B cell (primary cell): ENCODE measurements at regions of chr2 and their contacts with region 1.

Region 1: DNA sequence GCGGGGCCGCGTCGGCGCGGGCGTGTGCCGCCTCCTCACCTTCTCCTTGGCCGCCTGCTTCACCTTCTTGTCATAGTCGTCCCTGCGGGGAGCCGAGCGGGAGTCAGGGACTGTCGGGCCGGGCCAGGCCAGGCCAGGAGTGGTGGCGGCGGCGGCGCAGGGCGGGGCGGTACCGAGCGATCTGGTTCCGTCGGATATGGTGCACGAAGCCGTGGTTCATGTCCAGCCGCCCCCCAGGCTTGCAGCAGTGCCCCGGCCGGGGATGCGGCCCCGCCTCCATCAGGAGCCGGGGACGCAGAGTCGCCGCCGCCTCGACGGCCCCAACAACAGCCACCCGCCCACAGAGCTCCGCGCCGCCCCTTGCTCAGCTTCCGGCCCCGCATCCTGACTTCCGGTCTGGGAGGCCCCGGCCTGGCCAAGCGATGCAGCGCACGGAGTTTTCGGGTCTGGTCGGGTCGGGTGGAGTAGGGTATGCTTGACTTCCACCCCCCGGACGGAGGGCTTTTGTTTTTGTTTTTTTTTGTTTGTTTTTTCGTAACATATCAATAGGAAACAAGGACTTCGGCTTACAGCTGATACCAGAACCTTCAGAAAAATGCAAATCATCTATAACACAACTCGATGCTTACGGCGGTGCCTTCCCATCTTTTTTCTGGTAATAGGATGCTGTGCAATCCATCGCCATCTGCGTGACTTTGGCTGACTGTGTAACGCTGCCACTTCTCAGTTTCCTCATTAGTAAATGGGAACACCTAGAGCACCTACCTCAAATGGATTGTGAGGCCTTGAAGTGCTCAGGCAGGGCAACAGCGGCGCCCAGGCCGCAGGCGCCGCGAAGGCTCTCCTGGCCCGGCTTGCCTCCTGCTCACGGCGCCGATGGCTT is at the start of gene C2orf68:
- DNase-seq: peak; percentile 89
- ATAC-seq: peak; percentile 66
- H3K4me3 ChIP-seq: peak within 1 kb of the TSS; percentile 72 to 88 (median 76)
- H3K4me3 Mint-ChIP-seq: peak within 1 kb of the TSS; percentile 98
- H3K27ac ChIP-seq: peak within 1 kb of the TSS; percentile 34 to 83
- H3K27ac Mint-ChIP-seq: peak within 1 kb of the TSS; percentile 95
- H3K4me1 ChIP-seq: peaks cover 13 to 29% of the 10 kb centered on the region in 2 donors
- H3K4me1 Mint-ChIP-seq: peaks cover 33% of the 10 kb centered on the region
- H3K27me3 ChIP-seq: no peaks in the 10 kb centered on the region
- H3K27me3 Mint-ChIP-seq: no peaks in the 10 kb centered on the region
- CTCF ChIP-seq: no peak
- total RNA-seq, gene C2orf68: 82.4 and 90.1 TPM in 2 replicates

Region 2: GRCh38 chr2:85577386-85578242 is 34.3 kb before region 1 on chr2 and contains the start of gene VAMP8:
- CTCF ChIA-PET with region 1: no interaction called
- POLR2A ChIA-PET with region 1: interaction called, 3 read pairs
- intact Hi-C with region 1: loop called (anchors 1 kb)
- DNase-seq: peak; percentile 68
- ATAC-seq: peak; percentile 67
- H3K4me3 ChIP-seq: peak within 1 kb of the TSS; percentile 50 to 97 (median 70)
- H3K4me3 Mint-ChIP-seq: peak within 1 kb of the TSS; percentile 93
- H3K27ac ChIP-seq: peak within 1 kb of the TSS; percentile 70 to 87
- H3K27ac Mint-ChIP-seq: peak within 1 kb of the TSS; percentile 96
- H3K4me1 ChIP-seq: peaks cover 20 to 36% of the 10 kb centered on the region in 2 donors
- H3K4me1 Mint-ChIP-seq: peaks cover 37% of the 10 kb centered on the region
- H3K27me3 ChIP-seq: no peaks in the 10 kb centered on the region
- H3K27me3 Mint-ChIP-seq: no peaks in the 10 kb centered on the region
- CTCF ChIP-seq: no peak
- total RNA-seq, gene VAMP8: 73.1 and 73.8 TPM in 2 replicates

Region 3: DNA sequence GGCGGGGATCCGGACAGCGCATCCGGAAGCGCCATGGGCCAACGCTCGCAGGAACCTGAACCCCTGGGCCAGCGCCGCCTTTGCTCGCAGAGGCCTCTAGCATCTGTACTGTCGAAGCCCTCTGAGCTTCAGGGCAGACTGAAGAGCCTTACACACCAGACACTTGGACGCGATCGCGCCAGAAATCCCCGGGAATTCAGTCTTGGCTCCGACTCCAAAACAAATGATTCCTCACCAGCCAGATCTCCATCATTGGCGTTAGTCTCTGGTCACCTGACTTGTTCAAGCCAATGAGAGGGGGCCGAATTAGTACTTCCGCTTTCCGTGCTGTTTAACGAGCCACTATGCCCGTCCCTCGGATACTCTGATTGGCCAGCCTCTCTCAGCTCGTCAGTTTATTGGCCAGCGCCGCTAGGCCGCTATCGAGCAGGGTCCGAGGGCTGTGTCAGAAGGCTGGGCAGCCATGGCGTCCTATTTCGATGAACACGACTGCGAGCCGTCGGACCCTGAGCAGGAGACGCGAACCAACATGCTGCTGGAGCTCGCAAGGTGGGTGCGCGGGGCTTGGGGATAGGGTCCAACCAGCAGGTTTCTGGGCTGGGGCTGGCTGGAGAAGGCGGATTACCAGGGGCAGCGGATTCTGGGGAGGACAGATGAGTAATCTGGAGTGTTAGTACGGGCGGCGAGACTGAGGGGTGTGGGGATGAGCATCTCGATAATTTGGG is 16.5 kb before region 1 on chr2 and contains the start of gene RNF181:
- CTCF ChIA-PET with region 1: no interaction called
- POLR2A ChIA-PET with region 1: interaction called, 8 read pairs
- intact Hi-C with region 1: loop called (anchors 2 kb)
- DNase-seq: peak; percentile 94
- ATAC-seq: peak; percentile 100
- H3K4me3 ChIP-seq: peak within 1 kb of the TSS; percentile 65 to 93 (median 86)
- H3K4me3 Mint-ChIP-seq: peak within 1 kb of the TSS; percentile 92
- H3K27ac ChIP-seq: peak within 1 kb of the TSS; percentile 76 to 81
- H3K27ac Mint-ChIP-seq: peak within 1 kb of the TSS; percentile 95
- H3K4me1 ChIP-seq: peaks cover 17 to 23% of the 10 kb centered on the region in 2 donors
- H3K4me1 Mint-ChIP-seq: peaks cover 29% of the 10 kb centered on the region
- H3K27me3 ChIP-seq: no peaks in the 10 kb centered on the region
- H3K27me3 Mint-ChIP-seq: no peaks in the 10 kb centered on the region
- CTCF ChIP-seq: no peak
- total RNA-seq, gene RNF181: 67.3 and 76.6 TPM in 2 replicates

Region 4: DNA sequence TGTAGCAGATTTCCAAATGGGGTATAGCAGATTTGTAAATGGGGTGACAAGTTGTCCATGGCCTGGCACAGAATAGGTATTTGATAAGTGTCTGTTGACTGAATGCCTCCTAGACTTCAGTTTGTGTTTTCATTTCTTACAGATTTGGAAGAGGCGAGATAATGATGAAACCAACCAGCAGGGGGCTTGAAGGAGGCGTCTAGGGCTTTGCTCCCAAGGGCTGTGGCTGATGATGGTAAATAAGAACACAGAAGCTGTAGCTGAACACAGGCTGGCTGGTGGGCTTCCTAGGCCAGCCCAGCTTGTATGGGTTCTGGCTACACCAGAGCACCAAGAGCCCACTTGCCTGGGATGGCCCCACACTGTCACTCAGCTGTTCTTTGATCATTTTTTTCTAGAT is 36.7 kb after region 1 on chr2:
- CTCF ChIA-PET with region 1: no interaction called
- POLR2A ChIA-PET with region 1: no interaction called
- intact Hi-C with region 1: loop called (anchors 2 kb)
- DNase-seq: peak; percentile 52
- ATAC-seq: peak; percentile 35
- H3K4me3 ChIP-seq: no peak overlapping the region
- H3K4me3 Mint-ChIP-seq: peak overlapping the region; percentile 2
- H3K27ac ChIP-seq: peak overlapping the region in 1 of 2 donors; percentile 1
- H3K27ac Mint-ChIP-seq: no peak overlapping the region
- H3K4me1 ChIP-seq: peaks cover 18 to 26% of the 10 kb centered on the region in 2 donors
- H3K4me1 Mint-ChIP-seq: peaks cover 22% of the 10 kb centered on the region
- H3K27me3 ChIP-seq: no peaks in the 10 kb centered on the region
- H3K27me3 Mint-ChIP-seq: no peaks in the 10 kb centered on the region
- CTCF ChIP-seq: peak; percentile 69

Region 5: DNA sequence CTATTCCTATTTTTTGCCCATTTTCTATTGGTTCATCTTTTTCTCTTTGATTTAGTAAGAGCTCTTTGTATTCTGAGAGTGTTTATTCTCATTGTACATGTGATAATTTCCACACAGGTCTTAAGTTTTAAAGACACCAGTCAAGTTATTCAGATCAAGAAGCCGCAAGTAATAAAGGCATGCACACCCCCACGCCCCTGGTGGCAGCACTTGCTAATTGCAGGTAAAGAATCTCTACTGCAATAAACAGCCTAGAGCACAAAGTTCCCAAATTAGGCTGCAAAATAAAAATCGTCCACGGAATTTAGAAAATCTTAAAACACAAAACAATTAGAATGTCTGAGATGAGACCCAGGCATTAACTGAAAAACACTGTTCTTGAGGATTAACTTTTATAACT is 231.6 kb after region 1 on chr2:
- CTCF ChIA-PET with region 1: no interaction called
- POLR2A ChIA-PET with region 1: no interaction called
- intact Hi-C with region 1: no loop called
- DNase-seq: no peak
- ATAC-seq: no peak
- H3K4me3 ChIP-seq: no peak overlapping the region
- H3K4me3 Mint-ChIP-seq: no peak overlapping the region
- H3K27ac ChIP-seq: no peak overlapping the region
- H3K27ac Mint-ChIP-seq: no peak overlapping the region
- H3K4me1 ChIP-seq: peaks cover 3 to 17% of the 10 kb centered on the region in 2 donors
- H3K4me1 Mint-ChIP-seq: peaks cover 34% of the 10 kb centered on the region
- H3K27me3 ChIP-seq: no peaks in the 10 kb centered on the region
- H3K27me3 Mint-ChIP-seq: no peaks in the 10 kb centered on the region
- CTCF ChIP-seq: peak; percentile 35

Region 6: GRCh38 chr2:86105252-86105968 is 493.5 kb after region 1 on chr2 and contains the start of gene POLR1A:
- CTCF ChIA-PET with region 1: no interaction called
- POLR2A ChIA-PET with region 1: interaction called, 3 read pairs
- intact Hi-C with region 1: loop called (anchors 10 kb)
- DNase-seq: peak; percentile 95
- ATAC-seq: peak; percentile 76
- H3K4me3 ChIP-seq: peak within 1 kb of the TSS; percentile 88 to 96 (median 89)
- H3K4me3 Mint-ChIP-seq: peak within 1 kb of the TSS; percentile 93
- H3K27ac ChIP-seq: peak within 1 kb of the TSS; percentile 74 to 92
- H3K27ac Mint-ChIP-seq: peak within 1 kb of the TSS; percentile 95
- H3K4me1 ChIP-seq: peaks cover 16 to 22% of the 10 kb centered on the region in 2 donors
- H3K4me1 Mint-ChIP-seq: peaks cover 50% of the 10 kb centered on the region
- H3K27me3 ChIP-seq: no peaks in the 10 kb centered on the region
- H3K27me3 Mint-ChIP-seq: no peaks in the 10 kb centered on the region
- CTCF ChIP-seq: no peak
- total RNA-seq, gene POLR1A: 32.7 and 36.8 TPM in 2 replicates